Colonic mucosa (tissue), 4 donors: ENCODE measurements at regions of chr13 and their contacts with region 1.

Region 1: DNA sequence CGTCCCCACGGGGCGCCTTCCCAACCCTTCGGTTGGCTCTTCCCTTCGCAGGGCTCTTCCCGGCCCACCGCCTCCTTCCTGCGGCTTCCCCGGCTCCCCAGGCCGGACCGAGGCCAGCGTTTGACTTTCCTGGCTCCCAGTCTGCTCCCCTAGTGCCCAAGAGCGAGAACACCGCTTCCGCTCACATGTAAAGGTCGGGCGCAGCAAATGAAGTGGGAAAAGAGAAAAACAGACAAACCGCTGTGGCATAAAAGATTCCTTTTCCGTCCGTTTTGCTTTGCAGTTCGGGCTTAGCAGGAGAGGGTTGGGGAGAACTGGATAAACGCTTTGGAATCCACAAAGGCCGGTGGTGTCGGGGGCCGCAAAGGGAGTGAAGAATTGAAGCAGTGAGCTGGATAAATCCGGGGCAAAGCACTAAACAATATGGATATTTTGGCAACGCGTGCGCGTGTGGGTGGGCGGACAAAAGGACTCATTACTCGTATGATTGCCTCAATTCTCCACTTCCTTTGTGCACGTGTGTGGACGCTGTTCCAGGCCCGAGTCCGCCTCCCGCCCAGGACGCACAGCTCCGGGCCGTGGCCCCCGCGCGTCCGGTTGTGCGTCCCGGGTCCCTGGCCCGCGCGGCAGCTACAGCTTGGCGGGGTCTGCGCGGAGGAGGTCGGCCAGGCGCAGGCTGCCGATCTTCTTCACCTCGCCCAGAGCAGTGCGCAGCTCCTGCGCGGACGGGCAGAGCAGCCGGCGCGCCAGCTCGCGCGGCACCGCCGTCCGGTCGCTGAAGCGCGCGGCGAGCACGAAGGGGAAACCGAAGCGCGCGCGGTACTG is 8.6 kb upstream of the CDX2 start:
- DNase-seq: peak; percentile 28
- H3K4me3 ChIP-seq: peak overlapping the region; percentile 49
- H3K27ac ChIP-seq: peak overlapping the region; percentile 84
- H3K4me1 ChIP-seq: no peaks in the 10 kb centered on the region
- H3K27me3 ChIP-seq: peaks cover 22% of the 10 kb centered on the region
- CTCF ChIP-seq: no peak

Region 2: DNA sequence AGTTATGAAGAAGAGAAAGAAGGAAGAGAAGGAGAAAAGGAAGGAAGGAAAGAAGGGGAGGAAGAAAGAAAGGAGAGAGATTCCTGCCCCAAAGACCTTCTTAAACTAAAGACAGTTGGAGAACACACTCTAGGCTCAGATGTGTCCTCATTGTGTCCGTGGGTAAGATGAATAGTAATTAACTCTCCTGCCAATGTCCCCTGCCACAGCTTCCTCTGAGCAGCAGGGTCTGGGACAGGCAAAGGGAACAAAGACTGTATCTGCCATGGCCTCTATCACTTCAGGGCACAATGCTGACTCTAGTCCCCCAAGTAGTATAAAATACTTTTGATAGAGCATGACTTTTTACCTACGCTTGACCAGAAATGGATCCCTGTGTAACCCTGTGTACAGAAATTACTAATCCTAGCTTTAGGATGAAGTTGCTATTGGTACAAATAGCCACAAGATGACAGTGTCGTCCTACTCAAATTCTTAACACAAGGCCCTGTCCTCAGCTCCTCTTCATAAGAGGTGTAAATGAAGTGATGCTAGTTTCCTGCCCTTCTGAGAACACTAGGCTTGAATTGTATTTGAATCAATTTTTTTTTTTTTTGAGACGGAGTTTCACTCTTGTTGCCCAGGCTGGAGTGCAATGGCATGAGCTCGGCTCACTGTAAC is 1030.9 kb before region 1 on chr13:
- intact Hi-C with region 1: loop called (anchors 10 kb)
- DNase-seq: no peak
- H3K4me3 ChIP-seq: no peak overlapping the region
- H3K27ac ChIP-seq: no peak overlapping the region
- H3K4me1 ChIP-seq: peaks cover 7% of the 10 kb centered on the region
- H3K27me3 ChIP-seq: no peaks in the 10 kb centered on the region
- CTCF ChIP-seq: peak; percentile 67

Region 3: GRCh38 chr13:28173793-28174192 is 196.1 kb after region 1 on chr13:
- intact Hi-C with region 1: no loop called
- DNase-seq: no peak
- H3K4me3 ChIP-seq: no peak overlapping the region
- H3K27ac ChIP-seq: no peak overlapping the region
- H3K4me1 ChIP-seq: no peaks in the 10 kb centered on the region
- H3K27me3 ChIP-seq: no peaks in the 10 kb centered on the region
- CTCF ChIP-seq: no peak

Region 4: DNA sequence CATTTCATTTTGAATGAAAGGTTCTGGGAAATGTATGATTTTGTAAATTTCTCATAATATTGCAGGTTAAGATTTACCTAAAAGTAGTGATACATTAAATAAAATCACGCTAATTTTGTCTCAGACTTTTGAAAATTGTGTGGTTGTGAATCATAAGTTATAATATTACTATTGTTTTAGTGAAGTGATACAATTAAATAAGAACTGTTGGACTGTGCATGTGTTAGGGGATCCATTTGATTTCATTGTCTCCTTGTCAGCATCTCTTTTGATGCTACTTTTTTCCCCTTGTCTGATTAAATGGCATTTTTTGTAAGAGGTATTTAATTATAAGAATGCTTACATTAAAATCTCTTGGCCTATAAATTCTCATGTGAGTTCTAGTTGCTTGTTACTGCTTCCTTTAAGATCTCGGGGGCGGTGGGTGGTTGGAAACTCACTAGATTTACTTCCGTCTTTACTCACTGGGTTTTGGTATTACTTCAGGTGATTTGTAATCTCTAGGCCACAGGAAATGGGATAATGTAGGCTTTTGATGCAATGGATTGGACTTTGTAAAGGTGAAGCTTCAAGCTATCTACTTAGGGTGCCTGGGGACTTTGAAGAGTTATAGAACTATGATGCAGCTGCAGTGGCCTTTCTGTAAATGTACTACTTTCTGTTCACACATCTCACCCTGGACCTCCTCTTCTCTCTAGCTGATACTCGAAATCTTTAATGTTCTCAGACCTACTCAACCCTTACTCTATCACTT is 227.2 kb after region 1 on chr13:
- intact Hi-C with region 1: no loop called
- DNase-seq: no peak
- H3K4me3 ChIP-seq: no peak overlapping the region
- H3K27ac ChIP-seq: no peak overlapping the region
- H3K4me1 ChIP-seq: no peaks in the 10 kb centered on the region
- H3K27me3 ChIP-seq: no peaks in the 10 kb centered on the region
- CTCF ChIP-seq: no peak